Right ventricle myocardium inferior (tissue), 1 donor: ENCODE measurements at regions of chr18 and their contacts with region 1.

Region 1: DNA sequence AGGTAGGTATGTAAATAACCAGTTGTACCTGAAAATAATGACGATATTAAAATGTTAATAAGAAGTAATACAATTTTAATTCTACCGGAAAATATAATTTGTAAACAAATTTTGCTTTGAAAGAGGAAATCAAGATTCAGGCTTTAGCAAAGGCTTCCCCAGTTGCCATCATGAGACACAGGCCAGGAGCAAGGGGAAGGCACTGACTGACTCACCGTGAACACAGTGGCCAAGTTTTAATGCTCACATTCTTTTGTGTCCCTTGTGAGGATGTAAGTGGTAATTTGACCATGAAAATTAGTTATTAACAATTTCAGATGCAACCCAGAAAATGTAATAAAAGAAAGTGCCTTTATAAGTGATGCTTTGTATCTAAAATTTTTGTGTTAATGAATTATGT is 164.1 kb downstream of the GREB1L start:
- DNase-seq: no peak
- ATAC-seq: no peak

Region 2: GRCh38 chr18:21479721-21480120 is 73.6 kb after region 1 on chr18:
- intact Hi-C with region 1: loop called (anchors 10 kb)
- DNase-seq: no peak
- ATAC-seq: no peak